ENCODE measurements at regions of chr6 and their contacts with region 1.

Region 1: DNA sequence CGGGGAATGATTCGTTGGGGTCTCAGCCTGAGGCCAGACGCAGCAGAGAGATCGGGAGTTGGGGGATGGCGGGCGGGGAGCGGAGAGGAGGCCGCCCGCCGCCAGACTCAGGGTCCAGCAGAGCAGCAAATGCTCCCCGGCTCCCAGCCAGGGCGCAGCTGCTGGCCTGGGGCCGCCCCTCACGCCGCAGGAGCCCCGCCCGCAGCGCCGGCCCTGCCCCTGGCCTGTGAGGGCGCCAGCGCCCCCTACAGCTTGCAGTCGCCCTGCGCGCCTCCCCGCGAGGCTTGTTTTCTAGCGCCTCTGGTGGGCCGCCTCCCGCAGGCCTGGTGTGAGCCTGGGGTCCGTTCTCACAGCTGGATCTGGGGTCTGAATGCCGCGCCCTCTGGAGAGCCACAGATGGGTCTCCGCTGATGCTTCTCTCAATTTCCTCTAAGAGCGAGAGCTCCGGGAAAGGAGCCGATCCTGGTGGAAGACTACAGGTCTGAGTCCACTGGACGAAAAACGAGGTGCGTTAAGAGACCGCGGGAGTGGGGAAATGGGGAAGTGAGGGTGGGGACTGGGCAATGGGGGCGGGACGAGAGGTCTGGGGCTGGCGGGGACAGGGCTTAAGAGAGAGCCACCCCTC is 29.9 kb downstream of the TRIM38 start:
- DNase-seq: peak; percentile 73
- ATAC-seq: peak; percentile 91
- H3K4me3 ChIP-seq: peak overlapping the region; percentile 75
- H3K27ac ChIP-seq: peak overlapping the region; percentile 85
- H3K4me1 ChIP-seq: peaks cover 9% of the 10 kb centered on the region
- H3K27me3 ChIP-seq: no peaks in the 10 kb centered on the region
- CTCF ChIP-seq: peak; percentile 98 to 100 (median 100); a peak in 5 of 6 replicates
- EP300 ChIP-seq: 0 out of 4 replicates have a peak, but pooled peaks of 1 of the 2 experiments have one; percentile 14
- POLR2A ChIP-seq: peak; percentile 93
- RAD21 ChIP-seq: peak; percentile 76

Region 2: GRCh38 chr6:25223490-25223991 is 769.0 kb before region 1 on chr6:
- CTCF ChIA-PET with region 1: interaction called, 3 read pairs
- POLR2A ChIA-PET with region 1: no interaction called
- RAD21 ChIA-PET with region 1: no interaction called
- SMC1A ChIA-PET with region 1: no interaction called
- in situ Hi-C with region 1: no loop called
- intact Hi-C with region 1: loop called (anchors 10 kb)
- DNase-seq: peak; percentile 19
- ATAC-seq: peak; percentile 81
- H3K4me3 ChIP-seq: no peak overlapping the region; the same call in 1 of the 2 replicates
- H3K27ac ChIP-seq: no peak overlapping the region
- H3K4me1 ChIP-seq: no peaks in the 10 kb centered on the region
- H3K27me3 ChIP-seq: no peaks in the 10 kb centered on the region; a peak in 1 of 4 replicates
- CTCF ChIP-seq: peak; percentile 82 to 90 (median 84)
- EP300 ChIP-seq: 0 out of 4 replicates have a peak, but pooled peaks of 1 of the 2 experiments have one; percentile 11
- POLR2A ChIP-seq: no peak
- RAD21 ChIP-seq: peak; percentile 91

Region 3: GRCh38 chr6:25788305-25788922 is 204.1 kb before region 1 on chr6:
- CTCF ChIA-PET with region 1: interaction called, 24 read pairs
- POLR2A ChIA-PET with region 1: interaction called, 5 read pairs
- RAD21 ChIA-PET with region 1: interaction called, 4 read pairs
- SMC1A ChIA-PET with region 1: interaction called, 6 read pairs
- in situ Hi-C with region 1: no loop called
- intact Hi-C with region 1: loop called (anchors 5 kb)
- DNase-seq: no peak
- ATAC-seq: peak; percentile 82
- H3K4me3 ChIP-seq: no peak overlapping the region
- H3K27ac ChIP-seq: no peak overlapping the region
- H3K4me1 ChIP-seq: no peaks in the 10 kb centered on the region
- H3K27me3 ChIP-seq: no peaks in the 10 kb centered on the region; a peak in 1 of 4 replicates
- CTCF ChIP-seq: peak; percentile 55 to 69 (median 56); a peak in 5 of 6 replicates
- EP300 ChIP-seq: no peak
- POLR2A ChIP-seq: no peak
- RAD21 ChIP-seq: peak; percentile 58

Region 4: GRCh38 chr6:25934156-25934555 is 58.4 kb before region 1 on chr6:
- CTCF ChIA-PET with region 1: no interaction called
- POLR2A ChIA-PET with region 1: no interaction called
- RAD21 ChIA-PET with region 1: no interaction called
- SMC1A ChIA-PET with region 1: no interaction called
- in situ Hi-C with region 1: no loop called
- intact Hi-C with region 1: no loop called
- DNase-seq: no peak
- ATAC-seq: no peak
- H3K4me3 ChIP-seq: no peak overlapping the region
- H3K27ac ChIP-seq: no peak overlapping the region
- H3K4me1 ChIP-seq: no peaks in the 10 kb centered on the region
- H3K27me3 ChIP-seq: no peaks in the 10 kb centered on the region; a peak in 3 of 4 replicates
- CTCF ChIP-seq: no peak
- EP300 ChIP-seq: no peak
- POLR2A ChIP-seq: no peak
- RAD21 ChIP-seq: no peak

Region 5: DNA sequence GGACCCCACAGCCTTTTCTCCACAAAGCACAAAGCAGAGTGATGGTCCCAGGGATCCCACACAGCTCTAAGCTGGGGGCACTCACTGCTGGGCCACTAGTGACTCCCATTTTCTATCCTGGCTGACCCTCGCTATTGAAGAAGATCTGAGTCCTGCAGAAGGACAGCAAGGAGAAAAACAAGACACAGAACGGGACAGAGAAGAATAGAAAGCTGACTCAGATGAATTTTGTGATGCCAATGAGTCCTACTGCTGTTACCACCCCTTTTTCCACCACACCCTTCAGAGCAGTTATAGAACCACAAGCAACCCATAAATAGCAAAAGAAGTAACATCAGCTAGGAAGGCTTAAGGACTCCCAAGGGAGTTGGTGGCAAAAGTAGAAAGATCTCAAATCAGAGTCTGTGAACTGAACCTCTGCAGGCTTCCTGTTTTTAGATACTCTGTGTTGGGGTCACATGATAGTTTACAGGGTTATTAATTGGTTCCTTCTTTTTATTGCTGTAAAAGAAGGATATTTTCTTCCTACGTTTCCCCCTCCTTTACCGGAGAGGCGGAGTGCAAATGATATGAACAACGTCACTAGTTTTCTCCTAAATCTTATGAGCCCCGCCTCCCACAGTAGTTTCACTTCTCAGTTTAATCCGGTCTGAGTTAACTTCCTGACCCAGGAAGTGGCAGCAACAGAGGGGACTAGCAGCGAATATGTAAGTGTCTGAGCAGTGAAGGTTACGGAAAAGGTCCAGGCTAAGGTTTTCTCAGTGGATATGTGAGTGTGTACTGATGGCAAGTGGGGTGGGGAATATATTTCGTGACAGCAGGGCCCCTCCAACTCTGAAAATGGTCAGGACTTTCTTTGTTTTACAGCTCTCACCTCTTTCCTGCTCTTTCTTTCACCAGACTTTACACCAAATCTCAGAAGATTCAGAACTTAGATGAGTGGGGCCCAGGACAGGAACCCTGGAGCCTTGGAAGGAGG is 30.1 kb before region 1 on chr6 and contains the start of gene TRIM38:
- CTCF ChIA-PET with region 1: interaction called, 62 read pairs
- POLR2A ChIA-PET with region 1: interaction called, 27 read pairs
- RAD21 ChIA-PET with region 1: interaction called, 39 read pairs
- SMC1A ChIA-PET with region 1: interaction called, 24 read pairs
- in situ Hi-C with region 1: no loop called
- intact Hi-C with region 1: loop called (anchors 1 kb)
- DNase-seq: peak; percentile 85
- ATAC-seq: peak; percentile 84
- H3K4me3 ChIP-seq: peak within 1 kb of the TSS; percentile 99
- H3K27ac ChIP-seq: peak within 1 kb of the TSS; percentile 99
- H3K4me1 ChIP-seq: peaks cover 33% of the 10 kb centered on the region
- H3K27me3 ChIP-seq: no peaks in the 10 kb centered on the region
- CTCF ChIP-seq: no peak
- EP300 ChIP-seq: peak; percentile 46 to 64; a peak in 1 of 4 replicates
- POLR2A ChIP-seq: peak; percentile 91
- RAD21 ChIP-seq: no peak
- polyA plus RNA-seq, gene TRIM38: 4.5 to 5.9 TPM

Region 6: DNA sequence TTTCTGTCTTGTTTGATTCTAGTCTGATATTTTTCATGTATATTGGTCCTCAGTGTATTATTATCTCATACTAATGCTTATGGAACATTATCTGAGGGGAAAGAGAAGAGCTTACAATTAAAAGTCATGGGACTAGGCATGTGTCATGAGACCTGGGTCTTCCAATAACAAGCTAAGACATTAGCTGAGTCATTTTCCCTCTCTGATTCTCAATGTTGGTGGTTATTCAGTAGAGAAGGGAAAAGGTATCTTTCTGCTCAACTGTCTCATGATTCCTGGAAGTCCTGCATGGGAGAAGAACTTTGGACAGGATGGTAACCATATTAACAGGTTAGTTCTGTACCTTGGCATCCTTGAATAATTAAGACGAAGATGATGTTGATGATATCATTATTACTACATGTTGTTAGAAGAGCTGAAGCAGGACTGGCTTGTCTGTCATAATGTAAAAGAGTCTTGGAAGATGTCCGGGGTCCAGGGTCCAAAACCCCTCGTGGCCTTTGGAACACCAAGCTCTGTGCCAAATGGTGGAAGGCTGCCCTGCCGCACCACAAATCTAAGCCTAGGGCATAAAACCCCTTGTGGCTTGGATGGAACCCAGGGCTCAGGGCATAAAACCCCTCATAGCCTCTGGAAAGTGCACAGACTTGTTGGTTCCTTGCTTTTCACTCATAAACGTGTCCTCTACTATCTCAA is 10.8 kb before region 1 on chr6:
- CTCF ChIA-PET with region 1: interaction called, 11 read pairs
- POLR2A ChIA-PET with region 1: interaction called, 7 read pairs
- RAD21 ChIA-PET with region 1: interaction called, 5 read pairs
- SMC1A ChIA-PET with region 1: interaction called, 7 read pairs
- in situ Hi-C with region 1: no loop called
- intact Hi-C with region 1: no loop called
- DNase-seq: no peak
- ATAC-seq: no peak
- H3K4me3 ChIP-seq: no peak overlapping the region
- H3K27ac ChIP-seq: no peak overlapping the region
- H3K4me1 ChIP-seq: no peaks in the 10 kb centered on the region
- H3K27me3 ChIP-seq: no peaks in the 10 kb centered on the region
- CTCF ChIP-seq: no peak
- EP300 ChIP-seq: no peak
- POLR2A ChIP-seq: no peak
- RAD21 ChIP-seq: no peak

Region 7: GRCh38 chr6:26012061-26012460 is 19.5 kb after region 1 on chr6:
- CTCF ChIA-PET with region 1: interaction called, 112 read pairs
- POLR2A ChIA-PET with region 1: interaction called, 10 read pairs
- RAD21 ChIA-PET with region 1: no interaction called
- SMC1A ChIA-PET with region 1: interaction called, 76 read pairs
- in situ Hi-C with region 1: no loop called
- intact Hi-C with region 1: loop called (anchors 1 kb)
- DNase-seq: no peak
- ATAC-seq: no peak
- H3K4me3 ChIP-seq: no peak overlapping the region
- H3K27ac ChIP-seq: no peak overlapping the region
- H3K4me1 ChIP-seq: no peaks in the 10 kb centered on the region
- H3K27me3 ChIP-seq: no peaks in the 10 kb centered on the region
- CTCF ChIP-seq: no peak
- EP300 ChIP-seq: no peak
- POLR2A ChIP-seq: no peak
- RAD21 ChIP-seq: no peak

Region 8: DNA sequence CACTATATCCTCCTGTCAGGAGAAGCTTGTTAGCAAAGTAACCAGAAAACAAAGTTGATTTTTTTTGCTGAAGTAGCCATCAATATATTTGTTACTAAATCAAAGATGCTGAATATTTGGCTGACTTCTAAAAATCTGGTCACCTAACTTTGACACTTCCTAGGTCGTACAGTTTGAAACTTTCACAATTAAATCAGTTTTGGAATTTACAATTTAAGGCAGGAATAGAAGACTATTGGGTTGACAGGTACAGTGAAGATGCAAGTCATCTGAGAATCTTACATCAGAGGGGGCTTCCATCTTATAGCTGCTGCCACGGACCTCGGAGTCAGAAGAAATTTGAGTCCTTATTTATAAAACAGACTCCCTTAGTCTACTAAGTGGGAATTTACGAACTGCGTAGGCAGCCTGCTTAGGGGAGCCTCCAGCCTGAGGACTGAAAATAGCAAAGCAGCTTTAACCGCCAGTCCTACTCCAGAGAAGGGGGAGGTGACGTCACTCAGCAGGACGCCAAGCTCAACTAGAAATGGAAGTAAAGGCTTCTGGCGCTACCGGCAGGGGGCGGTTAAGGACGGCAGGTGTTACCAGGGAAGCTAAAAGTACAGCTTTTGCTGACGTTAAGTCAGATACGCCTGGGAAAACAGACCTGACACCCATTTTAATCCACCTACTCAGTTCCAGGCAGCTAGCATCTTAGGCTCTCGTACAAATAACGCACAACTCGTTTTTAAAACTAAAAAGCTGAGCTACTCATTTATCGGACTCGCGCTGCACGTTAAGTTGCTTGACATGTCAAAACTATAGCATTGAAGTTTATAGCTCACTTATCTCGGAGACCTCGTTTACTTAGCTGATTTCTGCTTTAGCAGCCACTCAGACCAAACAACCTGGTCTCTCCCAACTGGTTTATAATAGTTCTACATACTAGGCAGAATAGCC is 33.6 kb after region 1 on chr6:
- CTCF ChIA-PET with region 1: interaction called, 26 read pairs
- POLR2A ChIA-PET with region 1: interaction called, 34 read pairs
- RAD21 ChIA-PET with region 1: interaction called, 53 read pairs
- SMC1A ChIA-PET with region 1: interaction called, 25 read pairs
- in situ Hi-C with region 1: no loop called
- intact Hi-C with region 1: no loop called
- DNase-seq: peak; percentile 89
- ATAC-seq: peak; percentile 53
- H3K4me3 ChIP-seq: peak overlapping the region; percentile 63
- H3K27ac ChIP-seq: peak overlapping the region; percentile 95
- H3K4me1 ChIP-seq: peaks cover 12% of the 10 kb centered on the region
- H3K27me3 ChIP-seq: no peaks in the 10 kb centered on the region
- CTCF ChIP-seq: peak; percentile 82 to 95 (median 94)
- EP300 ChIP-seq: peak in 1 of 2 experiments; percentile 51; a peak in 2 of 4 replicates
- POLR2A ChIP-seq: no peak
- RAD21 ChIP-seq: peak; percentile 54

Region 9: DNA sequence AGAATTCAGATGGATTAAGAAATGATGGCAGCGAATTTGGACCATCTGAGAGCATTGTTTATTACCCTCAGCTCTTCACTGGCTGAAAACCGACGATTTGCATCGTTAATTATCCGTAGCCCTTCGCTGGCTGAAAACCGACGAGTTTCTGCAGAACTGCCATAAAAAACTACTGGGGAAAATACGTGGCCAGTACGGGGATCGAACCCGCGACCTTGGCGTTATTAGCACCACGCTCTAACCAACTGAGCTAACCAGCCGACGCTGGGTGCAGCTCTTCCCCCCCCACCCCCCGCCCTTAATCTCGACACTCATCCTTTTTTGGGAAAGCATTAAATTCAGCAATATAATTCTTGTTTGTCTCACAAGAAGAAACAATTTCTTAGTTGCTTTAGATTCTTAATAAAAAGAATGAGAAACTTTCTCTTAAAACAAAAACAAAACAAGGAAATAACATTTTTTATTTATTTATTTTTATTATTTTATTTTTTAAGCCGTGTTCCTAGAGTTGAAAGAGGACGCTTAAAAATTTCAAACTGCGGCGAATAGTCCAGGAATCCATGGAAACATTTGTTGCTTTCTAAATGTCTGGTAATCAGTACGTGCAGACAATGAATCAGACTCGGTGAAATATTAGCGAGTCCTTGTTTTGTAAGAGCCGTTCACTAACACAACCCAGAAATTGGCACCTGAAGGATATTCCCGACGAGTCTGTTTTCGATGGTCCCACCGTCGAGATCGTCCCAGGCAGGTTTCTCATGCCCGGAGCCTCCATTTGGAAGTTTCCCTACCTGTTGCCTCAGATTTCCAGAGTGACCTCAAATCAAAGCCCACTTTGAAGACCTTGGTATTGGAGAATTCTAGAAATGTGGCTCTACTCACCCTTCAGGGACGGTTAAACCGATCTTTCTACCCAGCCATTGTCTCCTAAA is 1282.8 kb after region 1 on chr6:
- CTCF ChIA-PET with region 1: no interaction called
- POLR2A ChIA-PET with region 1: no interaction called
- RAD21 ChIA-PET with region 1: no interaction called
- SMC1A ChIA-PET with region 1: no interaction called
- in situ Hi-C with region 1: no loop called
- intact Hi-C with region 1: no loop called
- DNase-seq: no peak
- ATAC-seq: no peak
- H3K4me3 ChIP-seq: no peak overlapping the region
- H3K27ac ChIP-seq: no peak overlapping the region
- H3K4me1 ChIP-seq: no peaks in the 10 kb centered on the region
- H3K27me3 ChIP-seq: peaks cover 0 to 2% of the 10 kb centered on the region in 2 experiments; a peak in 2 of 4 replicates
- CTCF ChIP-seq: no peak
- EP300 ChIP-seq: no peak
- POLR2A ChIP-seq: no peak
- RAD21 ChIP-seq: no peak

Region 10: GRCh38 chr6:27553123-27553904 is 1560.8 kb after region 1 on chr6:
- CTCF ChIA-PET with region 1: no interaction called
- POLR2A ChIA-PET with region 1: no interaction called
- RAD21 ChIA-PET with region 1: no interaction called
- SMC1A ChIA-PET with region 1: no interaction called
- in situ Hi-C with region 1: no loop called
- intact Hi-C with region 1: no loop called
- DNase-seq: peak; percentile 82
- ATAC-seq: peak; percentile 90
- H3K4me3 ChIP-seq: peak overlapping the region; percentile 44
- H3K27ac ChIP-seq: 0 out of 2 replicates have a peak overlapping the region, but pooled peaks have one; percentile 26
- H3K4me1 ChIP-seq: no peaks in the 10 kb centered on the region
- H3K27me3 ChIP-seq: no peaks in the 10 kb centered on the region; a peak in 2 of 4 replicates
- CTCF ChIP-seq: no peak
- EP300 ChIP-seq: no peak
- POLR2A ChIP-seq: no peak
- RAD21 ChIP-seq: no peak

Measured in GM12878 (cell line).